ENCODE measurements at regions of chr16 and their contacts with region 1.

Region 1: DNA sequence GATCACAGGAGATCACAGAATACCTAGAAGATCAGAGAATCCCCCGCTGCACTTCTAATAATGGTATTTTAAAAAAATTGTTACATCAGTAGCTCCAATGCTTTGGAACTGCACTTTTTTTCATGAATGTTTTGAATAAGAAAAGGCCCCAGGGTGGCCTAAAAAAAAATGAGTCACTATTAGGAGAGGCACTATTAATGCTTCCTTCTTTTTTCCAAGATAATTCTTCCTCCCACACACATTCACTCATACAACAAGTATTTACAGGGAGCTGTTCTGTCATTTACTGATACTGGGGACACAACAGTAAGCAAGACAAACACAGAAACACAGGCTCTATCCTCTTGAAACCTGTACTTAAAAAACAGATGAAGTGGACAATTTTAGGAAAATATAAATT is 675 bp upstream of the PDZD9 start:
- DNase-seq: no peak
- ATAC-seq: no peak
- H3K4me3 ChIP-seq: no peak overlapping the region
- H3K27ac ChIP-seq: no peak overlapping the region
- H3K4me1 ChIP-seq: peaks cover 0 to 19% of the 10 kb centered on the region in 2 donors
- H3K27me3 ChIP-seq: no peaks in the 10 kb centered on the region
- CTCF ChIP-seq: no peak
- POLR2A ChIP-seq: no peak

Region 2: GRCh38 chr16:21727344-21727743 is 274.2 kb before region 1 on chr16:
- in situ Hi-C with region 1: no loop called
- intact Hi-C with region 1: no loop called
- DNase-seq: no peak
- ATAC-seq: no peak
- H3K4me3 ChIP-seq: no peak overlapping the region
- H3K27ac ChIP-seq: no peak overlapping the region
- H3K4me1 ChIP-seq: no peaks in the 10 kb centered on the region
- H3K27me3 ChIP-seq: no peaks in the 10 kb centered on the region
- CTCF ChIP-seq: no peak
- POLR2A ChIP-seq: no peak

Region 3: DNA sequence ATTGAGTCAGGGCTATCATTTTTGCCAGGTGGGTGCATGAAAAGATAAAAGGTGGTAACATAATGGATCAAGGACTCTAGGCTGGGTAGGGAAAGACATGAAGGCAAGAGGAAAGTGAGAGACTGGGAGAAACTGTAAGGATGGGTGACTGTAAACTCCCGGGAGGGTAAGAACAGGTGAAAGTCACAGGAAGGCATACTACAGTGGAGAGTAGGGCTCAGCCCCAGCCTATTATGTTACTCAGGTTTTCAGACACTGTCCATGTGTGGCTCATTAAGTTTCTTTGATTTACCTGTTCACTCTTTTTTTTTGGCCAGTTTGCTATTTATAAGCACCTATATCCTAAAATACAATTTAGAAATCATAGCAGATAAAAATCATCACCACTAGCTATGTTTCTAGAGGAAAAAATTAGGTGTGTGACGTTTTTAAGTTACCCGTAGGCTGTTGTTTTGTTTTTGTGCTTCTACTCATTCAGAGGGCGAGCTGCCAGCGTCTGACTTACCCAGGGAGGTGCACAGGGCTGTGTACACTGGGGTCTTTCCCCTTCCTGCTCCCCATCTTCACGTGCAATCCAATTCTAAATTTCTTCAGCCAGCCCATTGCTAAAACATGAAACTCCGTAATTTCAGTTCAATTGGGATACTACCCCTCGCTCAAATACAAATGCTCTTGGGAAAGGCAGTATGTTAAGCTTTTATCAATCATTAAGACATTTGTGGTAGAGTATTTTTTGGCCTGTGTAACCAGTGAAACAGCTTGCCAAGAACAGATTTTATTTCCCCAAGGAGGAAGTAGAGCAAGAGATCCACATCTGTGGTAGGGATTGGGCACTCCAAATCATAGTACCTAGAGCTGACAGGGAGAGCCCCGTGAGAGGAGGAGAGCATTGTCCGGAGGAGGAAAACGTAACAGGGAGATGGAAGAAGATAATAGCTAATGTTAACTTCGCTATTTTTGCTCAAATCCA is 69.1 kb after region 1 on chr16:
- in situ Hi-C with region 1: loop called (anchors 5 to 10 kb)
- intact Hi-C with region 1: no loop called
- DNase-seq: no peak
- ATAC-seq: no peak
- H3K4me3 ChIP-seq: no peak overlapping the region
- H3K27ac ChIP-seq: peak overlapping the region; percentile 9 to 18 (median 12)
- H3K4me1 ChIP-seq: peaks cover 6 to 16% of the 10 kb centered on the region in 2 donors
- H3K27me3 ChIP-seq: no peaks in the 10 kb centered on the region
- CTCF ChIP-seq: no peak
- POLR2A ChIP-seq: no peak

Region 4: DNA sequence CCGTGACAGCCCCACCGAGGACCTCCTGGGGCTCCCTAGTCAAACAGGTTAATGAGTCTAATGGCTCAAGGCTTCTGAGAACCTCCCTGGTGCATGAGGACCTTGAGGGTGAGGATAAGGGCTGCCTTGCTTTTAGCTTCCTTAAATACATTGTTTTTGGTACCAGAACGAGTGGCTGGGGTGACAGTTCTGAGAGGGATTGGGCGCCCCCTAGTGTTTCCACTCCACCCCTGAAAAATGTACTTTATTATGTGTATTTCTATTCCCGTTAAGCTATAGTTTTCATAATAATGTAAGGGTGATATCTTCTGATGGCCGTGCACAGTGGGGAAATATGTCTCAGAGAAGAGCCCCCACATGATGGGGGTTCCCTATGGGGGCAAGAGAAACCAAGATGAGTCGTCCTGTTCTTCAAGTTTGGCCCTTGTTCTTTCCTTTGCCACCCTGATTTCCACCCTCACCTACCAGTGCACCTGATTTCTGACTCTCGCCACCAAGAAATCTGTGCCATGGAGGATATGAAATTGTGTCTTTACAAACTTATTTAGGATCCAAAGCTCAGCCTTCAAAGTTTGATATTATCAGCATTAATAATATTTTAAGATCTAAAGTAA is 76.2 kb after region 1 on chr16:
- in situ Hi-C with region 1: loop called (anchors 5 to 10 kb)
- intact Hi-C with region 1: loop called (anchors 1 kb)
- DNase-seq: peak in 1 of 2 donors; percentile 22
- ATAC-seq: peak in 1 of 2 donors; percentile 51
- H3K4me3 ChIP-seq: no peak overlapping the region
- H3K27ac ChIP-seq: no peak overlapping the region
- H3K4me1 ChIP-seq: no peaks in the 10 kb centered on the region
- H3K27me3 ChIP-seq: no peaks in the 10 kb centered on the region
- CTCF ChIP-seq: peak; percentile 49 to 79 (median 71)
- POLR2A ChIP-seq: no peak

Region 5: DNA sequence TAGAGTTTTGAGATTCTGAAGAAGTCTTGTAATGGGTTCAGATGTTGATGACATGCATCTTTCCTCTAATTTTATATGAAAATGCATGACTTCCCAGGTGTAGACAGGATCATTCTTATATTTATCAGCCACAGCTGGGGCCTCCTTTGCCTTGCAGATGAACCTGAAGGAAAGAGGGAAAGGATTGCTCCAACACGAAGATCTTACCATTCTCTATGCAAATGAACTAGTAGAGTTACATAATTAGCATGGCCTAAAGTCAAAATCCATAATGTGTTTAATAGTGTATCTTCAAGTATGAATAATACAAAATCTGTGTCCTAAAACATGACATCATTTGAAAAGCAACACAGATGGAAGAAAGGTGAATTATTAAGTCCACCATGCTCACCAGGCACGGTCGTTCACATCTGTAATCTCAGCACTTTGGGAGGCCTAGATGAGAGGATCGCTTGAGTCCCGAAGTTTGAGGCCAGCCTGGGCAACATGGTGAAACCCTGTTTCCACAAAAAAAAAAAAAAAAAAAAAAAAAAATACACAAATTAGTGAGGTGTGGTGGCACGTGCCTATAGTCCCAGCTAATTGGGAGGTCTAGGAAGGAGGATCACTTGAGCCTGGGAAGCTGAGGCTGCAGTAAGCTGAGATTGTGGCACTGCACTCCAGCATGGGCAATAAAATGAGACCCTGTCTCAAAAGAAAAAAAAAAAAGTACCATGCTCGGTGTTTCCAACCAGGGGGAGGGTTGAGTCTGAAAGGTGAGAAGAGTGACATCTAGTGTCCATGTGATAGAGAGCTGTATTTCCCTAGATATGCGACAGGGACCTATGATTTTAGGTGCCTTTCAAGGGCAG is 97.0 kb after region 1 on chr16:
- in situ Hi-C with region 1: no loop called
- intact Hi-C with region 1: loop called (anchors 5 kb)
- DNase-seq: no peak
- ATAC-seq: peak; percentile 61 to 77
- H3K4me3 ChIP-seq: no peak overlapping the region
- H3K27ac ChIP-seq: no peak overlapping the region
- H3K4me1 ChIP-seq: no peaks in the 10 kb centered on the region
- H3K27me3 ChIP-seq: no peaks in the 10 kb centered on the region
- CTCF ChIP-seq: peak in 3 of 5 experiments; percentile 21 to 60 (median 43)
- POLR2A ChIP-seq: no peak

Region 6: GRCh38 chr16:22183901-22184614 is 182.5 kb after region 1 on chr16:
- in situ Hi-C with region 1: loop called (anchors 5 to 10 kb)
- intact Hi-C with region 1: loop called (anchors 2 kb)
- DNase-seq: no peak
- ATAC-seq: no peak
- H3K4me3 ChIP-seq: no peak overlapping the region
- H3K27ac ChIP-seq: no peak overlapping the region
- H3K4me1 ChIP-seq: peaks cover 5% of the 10 kb centered on the region in 2 donors
- H3K27me3 ChIP-seq: no peaks in the 10 kb centered on the region
- CTCF ChIP-seq: no peak
- POLR2A ChIP-seq: no peak

Measured in gastrocnemius medialis (tissue), 4 donors.